ENCODE measurements at regions of chr17 and their contacts with region 1.

Region 1: DNA sequence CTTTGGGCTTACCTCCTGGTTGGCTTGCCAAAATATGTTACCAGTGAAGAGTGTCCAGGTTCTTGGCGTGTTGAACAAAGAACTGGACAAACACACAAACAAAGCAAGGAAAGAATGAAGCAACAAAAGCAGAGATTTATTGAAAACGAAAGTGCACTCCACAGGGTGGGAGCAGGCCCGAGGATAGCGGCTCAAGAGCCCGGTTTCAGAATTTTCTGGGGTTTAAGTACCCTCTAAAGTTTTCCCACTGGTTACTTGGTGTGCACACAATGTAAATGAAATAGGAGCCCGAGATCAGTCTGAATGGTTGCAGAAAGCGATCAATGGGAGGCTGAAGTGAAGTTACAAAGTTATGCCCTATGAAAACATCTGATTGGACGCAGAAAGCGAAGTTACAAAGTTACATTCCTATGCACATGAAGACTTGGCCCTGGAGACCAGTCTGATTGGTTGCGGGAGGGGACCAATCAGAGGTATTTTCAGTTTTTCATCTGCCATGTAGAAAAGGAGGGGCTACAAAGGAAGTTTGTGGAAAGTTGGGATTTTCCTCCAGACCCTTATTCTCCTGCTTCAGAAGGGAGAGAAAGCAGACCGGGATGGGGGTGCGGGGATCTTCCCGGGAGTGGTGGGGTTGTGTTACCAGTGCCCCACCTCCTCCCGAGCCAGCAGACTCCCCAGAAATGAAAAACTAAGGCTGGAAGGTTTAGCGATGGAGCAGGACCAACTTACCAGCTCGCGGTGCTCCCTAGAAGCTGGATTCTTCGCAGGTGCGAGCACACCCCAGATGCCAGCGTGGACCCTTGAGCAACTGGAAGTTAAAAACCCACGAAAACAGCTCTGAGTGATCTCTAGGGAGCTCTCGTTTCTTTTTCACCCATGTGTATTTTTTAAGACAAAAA is at the start of gene SLFN12:
- DNase-seq: peak; percentile 61
- H3K4me3 Mint-ChIP-seq: peak within 1 kb of the TSS; percentile 87
- H3K27ac Mint-ChIP-seq: peak within 1 kb of the TSS; percentile 84
- H3K4me1 Mint-ChIP-seq: peaks cover 41% of the 10 kb centered on the region
- H3K27me3 Mint-ChIP-seq: no peaks in the 10 kb centered on the region
- total RNA-seq, gene SLFN12: 10.0 to 10.7 TPM

Region 2: DNA sequence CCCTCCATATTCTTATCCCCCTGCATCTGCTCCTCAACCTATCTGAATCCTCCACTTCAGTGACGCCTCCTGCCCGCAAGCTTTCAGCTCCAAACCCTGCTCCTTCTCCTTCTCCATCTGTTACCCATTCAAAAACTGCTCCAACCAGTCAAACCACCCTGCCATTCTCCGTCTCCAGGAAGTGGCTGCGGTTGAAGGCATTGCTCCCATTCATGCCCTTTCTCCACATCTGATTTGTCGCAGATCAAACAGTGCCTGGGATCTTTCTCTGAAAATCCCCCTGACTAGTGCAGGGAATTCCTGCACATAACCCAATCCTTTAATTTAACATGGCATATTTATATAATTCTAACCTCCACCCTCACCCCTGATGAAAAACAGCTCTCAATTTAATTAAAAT is 133.3 kb before region 1 on chr17:
- CTCF ChIA-PET with region 1: no interaction called
- POLR2A ChIA-PET with region 1: no interaction called
- intact Hi-C with region 1: no loop called
- DNase-seq: no peak
- H3K4me3 Mint-ChIP-seq: no peak overlapping the region
- H3K27ac Mint-ChIP-seq: no peak overlapping the region
- H3K4me1 Mint-ChIP-seq: no peaks in the 10 kb centered on the region
- H3K27me3 Mint-ChIP-seq: no peaks in the 10 kb centered on the region

Region 3: DNA sequence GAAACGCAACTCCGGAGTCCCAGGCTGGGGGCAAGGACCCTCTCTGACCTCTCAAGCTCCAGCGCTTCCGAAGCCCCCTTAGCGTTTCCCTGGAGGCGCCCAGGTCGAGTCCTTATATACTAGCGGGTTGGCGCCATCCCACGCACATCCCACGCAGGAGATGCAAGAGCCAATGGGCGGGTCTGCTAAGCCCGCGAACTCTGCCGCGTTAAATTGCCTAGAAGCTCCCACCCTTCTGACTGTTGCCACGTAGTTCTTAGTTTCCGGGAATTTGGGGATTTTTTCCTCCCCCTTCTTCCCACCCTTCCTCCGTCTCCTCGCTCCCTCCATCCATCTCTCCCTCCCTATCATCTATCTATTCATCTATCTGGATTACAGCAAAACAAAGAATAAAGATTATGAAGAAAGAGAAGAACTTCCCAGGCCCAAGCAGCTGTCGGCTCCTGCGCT is 58.9 kb before region 1 on chr17 and contains the start of gene SLFN11:
- CTCF ChIA-PET with region 1: no interaction called
- POLR2A ChIA-PET with region 1: interaction called, 5 read pairs
- intact Hi-C with region 1: loop called (anchors 1 kb)
- DNase-seq: peak; percentile 94
- H3K4me3 Mint-ChIP-seq: peak within 1 kb of the TSS; percentile 96
- H3K27ac Mint-ChIP-seq: peak within 1 kb of the TSS; percentile 97
- H3K4me1 Mint-ChIP-seq: peaks cover 53% of the 10 kb centered on the region
- H3K27me3 Mint-ChIP-seq: no peaks in the 10 kb centered on the region
- total RNA-seq, gene SLFN11: 64.8 to 68.8 TPM

Region 4: DNA sequence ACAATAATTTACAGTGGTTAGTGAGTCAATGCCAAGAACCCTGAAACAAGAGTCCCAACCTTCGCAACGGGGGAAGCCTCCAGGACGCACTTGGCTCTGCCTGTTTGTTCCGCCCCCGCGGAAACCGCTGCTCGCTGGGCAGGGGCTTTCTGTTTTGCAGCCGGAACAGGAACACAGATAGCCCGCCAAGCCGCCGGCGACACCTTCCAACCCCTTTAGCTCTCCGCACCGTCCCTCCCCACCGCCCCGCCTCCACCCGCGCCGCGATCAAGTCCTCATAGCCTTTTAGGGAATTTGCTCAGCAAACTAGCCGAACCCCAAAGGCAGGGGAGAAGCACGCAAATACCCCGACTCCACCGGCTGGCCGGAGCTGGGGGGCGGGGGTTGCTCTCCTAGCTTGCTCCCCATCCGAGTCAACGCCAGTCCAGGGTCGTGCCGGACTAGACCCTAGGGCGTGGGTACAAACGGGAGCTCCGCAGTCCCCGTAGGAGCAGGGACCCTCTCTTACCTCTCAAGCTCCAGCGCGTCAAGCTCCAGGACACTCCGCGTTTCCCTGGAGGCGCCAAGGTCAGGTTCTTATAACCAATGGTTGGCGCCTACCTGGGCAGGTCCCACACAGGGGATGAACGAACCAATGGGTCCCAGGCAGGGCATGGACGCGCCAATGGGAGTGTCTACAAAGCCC is 15.9 kb after region 1 on chr17 and contains the start of gene SLFN13:
- CTCF ChIA-PET with region 1: interaction called, 3 read pairs
- POLR2A ChIA-PET with region 1: interaction called, 5 read pairs
- intact Hi-C with region 1: loop called (anchors 2 kb)
- DNase-seq: peak; percentile 97
- H3K4me3 Mint-ChIP-seq: peak within 1 kb of the TSS; percentile 57
- H3K27ac Mint-ChIP-seq: peak within 1 kb of the TSS; percentile 33
- H3K4me1 Mint-ChIP-seq: peaks cover 16% of the 10 kb centered on the region
- H3K27me3 Mint-ChIP-seq: no peaks in the 10 kb centered on the region
- total RNA-seq, gene SLFN13: 46.0 to 48.7 TPM

Region 5: DNA sequence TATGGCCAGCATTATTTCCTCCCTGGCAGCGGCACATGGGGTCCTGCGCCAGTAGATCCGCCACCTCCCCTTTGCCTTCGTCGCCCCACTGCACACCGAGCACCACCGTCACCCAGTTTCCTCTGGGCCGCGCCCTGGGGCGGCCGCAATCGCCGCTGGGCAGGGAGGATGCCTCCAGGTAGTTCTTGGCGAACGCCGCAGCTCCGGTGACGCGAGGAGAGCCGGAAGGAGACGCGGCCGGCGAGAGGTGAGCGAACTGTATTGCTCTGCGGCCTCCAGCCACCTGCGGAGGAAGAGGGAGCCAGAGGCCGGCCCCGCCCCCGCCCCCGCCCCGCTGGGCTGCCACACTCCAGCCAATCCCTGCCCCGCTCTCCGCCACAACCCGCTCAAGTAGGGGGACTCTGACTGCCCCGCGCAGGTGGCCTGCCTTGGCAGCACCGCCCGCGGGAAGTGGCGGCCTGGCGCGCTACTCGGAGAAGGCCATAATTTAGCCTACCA is 28.0 kb after region 1 on chr17:
- CTCF ChIA-PET with region 1: no interaction called
- POLR2A ChIA-PET with region 1: no interaction called
- intact Hi-C with region 1: loop called (anchors 5 kb)
- DNase-seq: peak; percentile 68
- H3K4me3 Mint-ChIP-seq: peak overlapping the region; percentile 45
- H3K27ac Mint-ChIP-seq: peak overlapping the region; percentile 4
- H3K4me1 Mint-ChIP-seq: peaks cover 17% of the 10 kb centered on the region
- H3K27me3 Mint-ChIP-seq: no peaks in the 10 kb centered on the region

Region 6: GRCh38 chr17:35486920-35487732 is 54.7 kb after region 1 on chr17:
- CTCF ChIA-PET with region 1: interaction called, 4 read pairs
- POLR2A ChIA-PET with region 1: interaction called, 3 read pairs
- intact Hi-C with region 1: loop called (anchors 1 kb)
- DNase-seq: peak; percentile 93
- H3K4me3 Mint-ChIP-seq: peak overlapping the region; percentile 80
- H3K27ac Mint-ChIP-seq: peak overlapping the region; percentile 88
- H3K4me1 Mint-ChIP-seq: peaks cover 45% of the 10 kb centered on the region
- H3K27me3 Mint-ChIP-seq: no peaks in the 10 kb centered on the region

Region 7: GRCh38 chr17:35578197-35578928 is 145.9 kb after region 1 on chr17 and contains the start of gene PEX12:
- CTCF ChIA-PET with region 1: no interaction called
- POLR2A ChIA-PET with region 1: no interaction called
- intact Hi-C with region 1: no loop called
- DNase-seq: peak; percentile 92
- H3K4me3 Mint-ChIP-seq: peak within 1 kb of the TSS; percentile 94
- H3K27ac Mint-ChIP-seq: peak within 1 kb of the TSS; percentile 98
- H3K4me1 Mint-ChIP-seq: peaks cover 20% of the 10 kb centered on the region
- H3K27me3 Mint-ChIP-seq: no peaks in the 10 kb centered on the region
- total RNA-seq, gene PEX12: 4.9 to 6.0 TPM

Measured in activated CD4-positive, alpha-beta memory T cell treated with anti-CD3 and anti-CD28 coated beads for 36 hours (primary cell).